AG04449 (cell line): ENCODE measurements at regions of chr7 and their contacts with region 1.

Region 1: GRCh38 chr7:51141451-51142003 is 175.1 kb downstream of the COBL start:
- DNase-seq: no peak
- H3K4me3 ChIP-seq: no peak overlapping the region
- CTCF ChIP-seq: peak; percentile 52

Region 2: DNA sequence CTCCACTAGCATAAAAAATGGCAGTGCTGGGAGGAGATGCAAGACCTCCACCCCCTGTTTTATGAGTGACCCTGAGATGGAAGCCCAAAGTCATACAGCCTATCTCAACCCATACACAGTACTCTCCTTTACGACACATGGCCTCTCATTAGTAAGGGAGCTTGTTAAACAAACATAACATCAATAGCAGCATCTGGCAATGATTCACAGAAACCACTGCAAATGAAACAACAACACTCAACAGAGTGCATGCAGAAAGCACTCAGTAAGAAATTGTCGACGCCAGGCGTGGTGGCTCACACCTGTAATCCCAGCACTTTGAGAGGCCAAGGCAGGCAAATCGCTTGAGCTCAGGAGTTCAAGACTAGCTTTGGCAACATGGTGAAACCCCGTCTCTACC is 663.9 kb before region 1 on chr7:
- CTCF ChIA-PET with region 1: interaction called, 13 read pairs
- POLR2A ChIA-PET with region 1: no interaction called
- DNase-seq: no peak
- H3K4me3 ChIP-seq: no peak overlapping the region
- CTCF ChIP-seq: no peak

Region 3: GRCh38 chr7:50632561-50633413 is 508.7 kb before region 1 on chr7:
- CTCF ChIA-PET with region 1: interaction called, 13 read pairs
- POLR2A ChIA-PET with region 1: no interaction called
- DNase-seq: no peak
- H3K4me3 ChIP-seq: no peak overlapping the region
- CTCF ChIP-seq: peak; percentile 72

Region 4: DNA sequence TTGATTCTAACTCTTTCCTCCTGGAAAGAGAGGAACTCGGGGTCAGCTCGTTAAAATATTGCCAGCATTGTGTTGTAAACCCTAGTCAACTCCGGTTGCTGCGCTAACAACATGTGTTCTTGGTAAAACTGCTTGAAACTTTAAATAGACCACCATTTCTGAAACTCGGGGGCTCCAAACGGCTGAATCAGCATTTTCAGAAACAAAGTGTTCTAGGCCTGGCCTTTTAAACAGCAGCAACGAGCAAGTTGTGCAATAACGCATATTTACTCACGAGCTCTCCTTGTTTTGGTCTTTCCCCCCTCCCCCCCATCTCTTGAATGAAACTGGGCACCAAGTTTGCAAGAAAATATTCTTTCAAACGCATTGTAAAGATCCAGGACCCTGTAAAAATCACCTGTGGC is 349.6 kb before region 1 on chr7:
- CTCF ChIA-PET with region 1: interaction called, 15 read pairs
- POLR2A ChIA-PET with region 1: no interaction called
- DNase-seq: no peak
- H3K4me3 ChIP-seq: peak overlapping the region; percentile 78
- CTCF ChIP-seq: no peak

Region 5: DNA sequence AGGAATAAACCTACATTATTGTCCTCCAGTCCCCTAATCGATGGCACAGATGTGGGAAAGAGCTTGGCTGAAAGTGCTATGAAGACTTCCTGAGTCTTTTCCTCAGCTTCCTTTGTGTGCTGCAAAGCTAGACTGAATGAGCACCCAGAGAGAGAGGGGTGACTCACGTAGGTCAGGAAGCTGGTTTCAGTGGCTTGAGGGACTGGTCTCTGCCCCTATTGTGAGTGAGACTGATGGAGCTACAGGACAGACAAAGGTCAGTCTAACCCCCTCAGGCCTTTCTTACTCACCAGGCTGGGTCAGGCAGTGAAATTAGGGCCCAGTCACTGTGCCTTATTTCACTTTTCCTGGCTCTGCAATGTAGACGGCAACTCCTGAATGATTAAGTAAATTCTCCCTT is 187.7 kb before region 1 on chr7:
- CTCF ChIA-PET with region 1: no interaction called
- POLR2A ChIA-PET with region 1: no interaction called
- DNase-seq: no peak
- H3K4me3 ChIP-seq: no peak overlapping the region
- CTCF ChIP-seq: no peak

Region 6: DNA sequence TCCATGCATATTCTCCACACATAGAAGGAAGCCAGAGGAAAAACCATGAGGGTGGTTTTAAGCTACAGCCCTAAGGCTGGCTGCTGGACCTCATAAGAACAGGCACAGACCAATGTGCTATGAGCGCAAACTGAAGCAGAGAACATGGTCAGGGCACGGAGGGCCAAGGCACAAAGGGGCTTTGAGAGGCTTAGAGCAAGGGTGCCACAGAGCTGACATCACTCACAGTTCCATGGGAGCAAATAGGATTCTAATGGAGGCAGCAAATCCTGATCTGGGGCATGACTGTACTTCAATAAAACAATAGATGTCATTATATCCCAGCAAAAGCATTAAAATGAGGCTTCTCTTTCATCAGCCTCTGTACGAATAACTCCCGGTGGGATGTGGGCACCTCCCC is 12.7 kb after region 1 on chr7:
- CTCF ChIA-PET with region 1: interaction called, 84 read pairs
- POLR2A ChIA-PET with region 1: no interaction called
- DNase-seq: no peak
- H3K4me3 ChIP-seq: no peak overlapping the region
- CTCF ChIP-seq: no peak